Esophagus muscularis mucosa (tissue), 4 donors: ENCODE measurements at regions of chr4 and their contacts with region 1.

Region 1: GRCh38 chr4:168942985-168943384 is 67.1 kb downstream of the CBR4 start:
- DNase-seq: no peak
- H3K4me3 ChIP-seq: no peak overlapping the region
- H3K27ac ChIP-seq: no peak overlapping the region
- H3K4me1 ChIP-seq: no peaks in the 10 kb centered on the region
- H3K27me3 ChIP-seq: no peaks in the 10 kb centered on the region
- CTCF ChIP-seq: peak; percentile 41 to 74 (median 53)
- EP300 ChIP-seq: no peak
- POLR2A ChIP-seq: no peak

Region 2: DNA sequence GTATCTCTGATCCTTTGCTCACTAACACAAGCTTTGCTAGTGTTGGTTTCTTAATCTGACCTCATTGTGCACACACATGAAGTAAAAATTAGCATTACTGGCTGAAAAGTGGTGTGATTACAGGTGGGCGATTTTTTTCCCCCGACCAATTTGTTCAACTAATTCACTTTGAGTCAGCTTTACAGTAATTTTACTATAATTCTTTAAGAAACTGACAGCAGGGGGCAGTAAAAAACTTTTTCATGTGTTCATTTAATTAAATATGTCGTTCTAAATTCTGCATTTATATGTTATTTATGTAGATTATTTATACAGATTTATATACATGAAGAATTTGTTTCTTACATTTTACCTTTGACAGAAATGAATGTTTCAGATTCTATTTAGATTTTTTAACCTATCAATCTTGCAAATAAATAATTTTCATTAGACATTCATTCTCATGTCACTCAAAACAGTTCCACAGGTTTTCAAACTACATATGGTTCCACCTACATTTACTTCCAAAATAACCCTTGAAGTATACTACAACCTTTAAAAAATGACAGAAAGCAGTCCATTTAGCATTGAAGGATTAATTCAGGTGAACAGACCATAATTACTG is 428.6 kb before region 1 on chr4:
- intact Hi-C with region 1: loop called (anchors 10 kb)
- DNase-seq: no peak
- H3K4me3 ChIP-seq: no peak overlapping the region
- H3K27ac ChIP-seq: no peak overlapping the region
- H3K4me1 ChIP-seq: peaks cover 0 to 6% (median 3%) of the 10 kb centered on the region in 4 donors
- H3K27me3 ChIP-seq: no peaks in the 10 kb centered on the region
- CTCF ChIP-seq: peak; percentile 36 to 49 (median 47)
- EP300 ChIP-seq: no peak
- POLR2A ChIP-seq: no peak